A549 (cell line): ENCODE measurements at regions of chr13 and their contacts with region 1.

Region 1: DNA sequence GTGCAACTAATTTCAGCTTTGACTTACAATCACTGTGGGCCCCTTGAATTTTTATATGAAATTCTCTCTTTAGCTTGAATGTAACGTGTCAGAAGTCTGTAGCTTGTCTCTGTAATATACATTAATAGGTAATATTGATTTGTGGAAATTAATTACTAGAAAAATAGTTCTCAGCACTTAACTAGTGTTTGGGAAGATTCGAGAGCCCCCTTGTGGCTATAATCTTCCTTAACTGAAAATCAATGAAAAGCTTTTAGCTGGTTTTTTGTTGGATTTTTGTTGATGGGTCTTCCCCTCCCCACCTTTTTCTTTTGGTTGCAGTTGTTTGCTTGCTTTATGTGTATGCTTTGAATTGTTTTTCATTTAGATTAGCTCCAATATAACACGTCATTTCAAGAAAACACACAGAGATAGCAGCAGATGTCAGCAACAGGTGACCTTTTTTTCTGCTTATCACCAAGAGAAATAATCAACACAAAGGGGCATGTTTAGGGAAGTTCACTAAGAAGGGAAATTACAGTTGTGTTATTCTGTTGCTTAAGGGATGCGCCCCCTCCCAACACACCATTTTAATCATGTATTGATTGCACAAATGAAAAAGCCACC is 176.8 kb downstream of the OXGR1 start:
- DNase-seq: peak in 1 of 2 experiments; percentile 8
- ATAC-seq: no peak
- H3K4me3 ChIP-seq: no peak overlapping the region
- H3K27ac ChIP-seq: no peak overlapping the region
- H3K4me1 ChIP-seq: no peaks in the 10 kb centered on the region
- CTCF ChIP-seq: peak; percentile 34; the same call in 2 of the 3 replicates
- EP300 ChIP-seq: no peak
- POLR2A ChIP-seq: no peak
- RAD21 ChIP-seq: peak in 1 of 2 experiments; percentile 41; a peak in 2 of 5 replicates

Region 2: GRCh38 chr13:96020155-96020575 is 797.3 kb before region 1 on chr13:
- CTCF ChIA-PET with region 1: interaction called, 24 read pairs
- POLR2A ChIA-PET with region 1: no interaction called
- DNase-seq: peak; percentile 31 to 67
- ATAC-seq: peak; percentile 94 to 97
- H3K4me3 ChIP-seq: no peak overlapping the region
- H3K27ac ChIP-seq: no peak overlapping the region
- H3K4me1 ChIP-seq: no peaks in the 10 kb centered on the region
- CTCF ChIP-seq: peak; percentile 50
- EP300 ChIP-seq: no peak
- POLR2A ChIP-seq: no peak
- RAD21 ChIP-seq: peak; percentile 64 to 66

Region 3: DNA sequence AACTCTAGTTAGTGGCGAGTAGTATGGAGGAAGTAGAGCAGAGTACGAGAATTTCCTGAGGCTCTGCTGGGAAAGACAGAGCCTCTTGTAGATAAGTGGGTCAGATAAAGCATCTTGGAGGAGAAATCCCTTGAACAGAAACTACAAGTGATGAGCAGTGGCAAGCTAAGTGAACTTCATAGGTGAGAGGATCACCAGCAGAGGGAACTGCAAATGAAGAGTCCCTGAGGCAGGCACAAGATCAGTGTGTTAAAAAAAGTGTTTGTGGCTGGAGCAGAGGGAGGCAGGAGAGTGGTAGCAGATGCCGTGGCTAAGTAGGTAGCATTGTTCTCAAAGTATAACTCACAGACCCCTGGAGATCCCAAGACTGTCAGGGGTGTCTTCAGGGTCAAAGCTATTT is 289.9 kb before region 1 on chr13:
- CTCF ChIA-PET with region 1: no interaction called
- POLR2A ChIA-PET with region 1: no interaction called
- DNase-seq: no peak
- ATAC-seq: no peak
- H3K4me3 ChIP-seq: no peak overlapping the region
- H3K27ac ChIP-seq: no peak overlapping the region
- H3K4me1 ChIP-seq: no peaks in the 10 kb centered on the region
- CTCF ChIP-seq: no peak
- EP300 ChIP-seq: no peak
- POLR2A ChIP-seq: no peak
- RAD21 ChIP-seq: no peak

Region 4: DNA sequence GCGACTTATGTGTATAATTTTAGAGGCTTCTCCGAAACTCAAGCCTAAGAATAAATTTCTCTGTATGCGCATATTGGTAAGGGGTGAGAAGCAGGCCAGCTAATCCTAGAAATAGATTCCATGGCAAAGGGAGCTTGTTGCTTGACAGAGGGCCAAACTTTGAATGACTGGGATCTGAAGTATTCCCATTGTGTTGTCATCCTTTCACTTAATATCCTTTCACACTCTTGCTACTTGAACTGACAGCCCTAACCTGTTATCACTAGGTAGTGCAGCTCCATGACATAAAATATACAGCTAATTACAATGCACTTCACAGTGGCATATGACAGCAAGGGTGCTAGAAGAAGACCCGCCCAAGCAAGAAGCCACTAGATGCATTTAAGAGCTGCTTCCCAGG is 133.0 kb before region 1 on chr13:
- CTCF ChIA-PET with region 1: no interaction called
- POLR2A ChIA-PET with region 1: no interaction called
- DNase-seq: no peak
- ATAC-seq: no peak
- H3K4me3 ChIP-seq: no peak overlapping the region
- H3K27ac ChIP-seq: no peak overlapping the region
- H3K4me1 ChIP-seq: no peaks in the 10 kb centered on the region
- CTCF ChIP-seq: no peak
- EP300 ChIP-seq: no peak
- POLR2A ChIP-seq: no peak
- RAD21 ChIP-seq: no peak

Region 5: GRCh38 chr13:97395447-97396136 is 578.2 kb after region 1 on chr13:
- CTCF ChIA-PET with region 1: no interaction called
- POLR2A ChIA-PET with region 1: no interaction called
- DNase-seq: peak; percentile 9 to 12
- ATAC-seq: peak; percentile 54 to 80
- H3K4me3 ChIP-seq: no peak overlapping the region
- H3K27ac ChIP-seq: peak overlapping the region; percentile 27 to 73; a peak in 5 of 6 replicates
- H3K4me1 ChIP-seq: peaks cover 14% of the 10 kb centered on the region; the same call in 2 of the 3 replicates
- CTCF ChIP-seq: no peak
- EP300 ChIP-seq: no peak
- POLR2A ChIP-seq: no peak
- RAD21 ChIP-seq: no peak